ENCODE measurements at regions of chr13 and their contacts with region 1.

Region 1: DNA sequence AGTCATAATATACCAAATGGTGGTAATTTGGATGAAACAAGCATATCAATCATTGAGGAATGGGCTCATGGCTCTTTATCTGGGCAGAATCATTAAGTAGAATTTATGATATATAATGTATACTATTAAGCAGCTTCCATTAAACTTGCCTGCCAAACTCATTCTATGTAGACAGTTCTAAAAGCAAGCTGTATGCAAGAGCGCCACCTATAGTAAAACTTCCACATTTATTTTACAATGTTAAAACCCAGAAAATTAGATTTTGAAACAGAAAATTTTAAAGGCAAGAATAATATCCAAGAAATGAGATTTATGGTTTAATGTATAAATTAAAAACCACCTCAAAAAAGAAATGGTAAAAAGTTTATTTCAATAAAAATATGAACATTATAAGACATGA is 161.5 kb downstream of the MZT1 start:
- DNase-seq: no peak
- ATAC-seq: no peak
- H3K4me3 Mint-ChIP-seq: no peak overlapping the region
- H3K27ac Mint-ChIP-seq: no peak overlapping the region
- H3K4me1 Mint-ChIP-seq: no peaks in the 10 kb centered on the region
- H3K27me3 Mint-ChIP-seq: peaks cover 2% of the 10 kb centered on the region

Region 2: DNA sequence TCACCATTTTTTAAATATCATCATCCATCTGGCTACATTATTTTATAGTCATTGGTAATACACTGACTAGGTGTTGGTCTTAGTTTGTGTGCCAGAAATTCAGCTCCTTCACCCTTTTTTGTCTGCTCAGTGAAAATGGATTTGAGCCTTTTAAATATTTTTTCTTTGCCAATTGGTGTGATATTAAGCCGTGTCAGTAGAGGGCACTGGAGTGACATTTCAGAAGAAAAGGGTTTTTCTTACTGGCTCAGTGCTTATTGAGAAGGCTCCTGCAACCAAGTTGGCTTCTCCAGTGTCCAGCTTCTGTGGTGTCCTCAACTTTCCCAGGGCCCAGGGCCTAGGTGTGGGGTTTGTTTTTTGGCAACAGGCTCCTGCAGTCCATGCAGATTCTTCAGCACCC is 1245.4 kb before region 1 on chr13:
- CTCF ChIA-PET with region 1: no interaction called
- POLR2A ChIA-PET with region 1: no interaction called
- intact Hi-C with region 1: loop called in 1 of 2 experiments (anchors 10 kb)
- DNase-seq: peak; percentile 18
- ATAC-seq: no peak
- H3K4me3 Mint-ChIP-seq: no peak overlapping the region
- H3K27ac Mint-ChIP-seq: no peak overlapping the region
- H3K4me1 Mint-ChIP-seq: no peaks in the 10 kb centered on the region
- H3K27me3 Mint-ChIP-seq: no peaks in the 10 kb centered on the region

Region 3: DNA sequence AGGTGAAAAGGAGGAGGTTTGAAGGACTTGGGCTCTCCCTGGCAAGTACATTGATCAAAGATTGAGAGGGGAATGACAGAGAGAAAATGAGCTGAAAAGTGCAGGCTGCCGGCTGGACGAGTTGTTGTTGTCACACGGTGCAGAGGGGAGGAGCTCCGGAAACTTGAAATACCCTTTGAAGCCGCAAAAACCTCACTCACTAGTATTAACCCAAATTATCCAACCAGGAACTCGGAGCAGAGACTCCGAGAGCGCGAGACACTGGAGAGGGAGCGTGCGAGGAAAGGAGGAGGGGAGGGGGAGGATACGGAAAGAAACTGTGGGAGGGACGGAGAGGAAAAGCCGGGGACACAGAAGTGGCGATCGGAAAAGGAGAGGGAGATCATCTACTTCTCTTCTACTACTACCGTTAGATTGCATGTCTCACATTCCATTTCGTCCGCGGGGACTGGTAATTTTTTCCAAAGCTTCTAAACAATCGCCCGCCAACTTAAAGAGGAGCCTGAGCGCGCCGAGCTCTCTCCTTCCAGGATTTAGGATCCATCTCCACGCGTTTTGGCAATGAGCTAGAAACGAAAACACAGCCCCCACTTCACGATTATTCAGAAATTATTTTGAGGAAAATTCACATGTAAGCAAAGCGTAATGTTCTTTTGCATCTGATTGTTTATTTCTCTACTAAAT is 698.6 kb before region 1 on chr13 and contains the start of gene DACH1:
- CTCF ChIA-PET with region 1: no interaction called
- POLR2A ChIA-PET with region 1: no interaction called
- intact Hi-C with region 1: loop called in 1 of 2 experiments (anchors 10 kb)
- DNase-seq: peak; percentile 54
- ATAC-seq: peak; percentile 47
- H3K4me3 Mint-ChIP-seq: peak within 1 kb of the TSS; percentile 81
- H3K27ac Mint-ChIP-seq: peak within 1 kb of the TSS; percentile 55
- H3K4me1 Mint-ChIP-seq: peaks cover 19% of the 10 kb centered on the region
- H3K27me3 Mint-ChIP-seq: peaks cover 48% of the 10 kb centered on the region
- total RNA-seq, gene DACH1: 0.09 to 0.21 TPM